ENCODE measurements at regions of chr17 and their contacts with region 1.

Region 1: DNA sequence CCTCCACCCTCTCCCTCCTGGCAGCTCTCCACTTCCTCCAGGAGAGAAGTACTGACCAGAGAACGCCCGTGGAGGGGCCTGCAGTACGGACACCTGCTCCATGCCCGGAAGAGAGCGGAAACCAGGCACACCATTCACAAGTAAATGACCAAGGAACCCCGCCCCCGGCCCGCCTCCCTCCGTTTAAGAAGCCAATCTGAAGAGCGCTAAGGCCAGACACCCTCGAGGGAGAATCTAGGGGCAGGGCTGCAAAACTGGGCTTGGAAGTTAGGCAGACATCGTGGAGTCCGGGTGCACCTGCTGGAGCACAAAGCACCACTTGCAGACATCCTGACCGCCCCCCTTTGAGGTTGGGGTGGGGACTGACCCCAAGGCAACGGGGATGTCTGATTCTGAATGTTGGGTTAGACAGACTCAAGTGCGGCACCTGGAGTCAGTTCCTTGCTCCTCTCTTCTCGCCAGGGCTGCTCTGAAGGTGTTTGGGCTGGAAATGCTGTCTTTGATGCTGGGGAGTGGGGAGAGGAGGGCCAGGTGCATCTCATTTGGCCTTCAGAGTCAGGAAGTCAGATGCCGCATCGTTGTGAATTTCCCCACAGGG is 964 bp upstream of the FAAP100 start:
- DNase-seq: peak; percentile 34 to 83 (median 75)
- ATAC-seq: peak; percentile 77
- H3K4me3 ChIP-seq: peak overlapping the region; percentile 77
- H3K4me3 Mint-ChIP-seq: peak overlapping the region; percentile 88 to 93 (median 90)
- H3K27ac ChIP-seq: peak overlapping the region; percentile 95
- H3K27ac Mint-ChIP-seq: peak overlapping the region; percentile 69 to 95 (median 92)
- H3K4me1 ChIP-seq: peaks cover 17% of the 10 kb centered on the region in 2 donors
- H3K4me1 Mint-ChIP-seq: peaks cover 16 to 41% (median 36%) of the 10 kb centered on the region in 7 donors
- H3K27me3 ChIP-seq: no peaks in the 10 kb centered on the region
- H3K27me3 Mint-ChIP-seq: no peaks in the 10 kb centered on the region

Region 2: DNA sequence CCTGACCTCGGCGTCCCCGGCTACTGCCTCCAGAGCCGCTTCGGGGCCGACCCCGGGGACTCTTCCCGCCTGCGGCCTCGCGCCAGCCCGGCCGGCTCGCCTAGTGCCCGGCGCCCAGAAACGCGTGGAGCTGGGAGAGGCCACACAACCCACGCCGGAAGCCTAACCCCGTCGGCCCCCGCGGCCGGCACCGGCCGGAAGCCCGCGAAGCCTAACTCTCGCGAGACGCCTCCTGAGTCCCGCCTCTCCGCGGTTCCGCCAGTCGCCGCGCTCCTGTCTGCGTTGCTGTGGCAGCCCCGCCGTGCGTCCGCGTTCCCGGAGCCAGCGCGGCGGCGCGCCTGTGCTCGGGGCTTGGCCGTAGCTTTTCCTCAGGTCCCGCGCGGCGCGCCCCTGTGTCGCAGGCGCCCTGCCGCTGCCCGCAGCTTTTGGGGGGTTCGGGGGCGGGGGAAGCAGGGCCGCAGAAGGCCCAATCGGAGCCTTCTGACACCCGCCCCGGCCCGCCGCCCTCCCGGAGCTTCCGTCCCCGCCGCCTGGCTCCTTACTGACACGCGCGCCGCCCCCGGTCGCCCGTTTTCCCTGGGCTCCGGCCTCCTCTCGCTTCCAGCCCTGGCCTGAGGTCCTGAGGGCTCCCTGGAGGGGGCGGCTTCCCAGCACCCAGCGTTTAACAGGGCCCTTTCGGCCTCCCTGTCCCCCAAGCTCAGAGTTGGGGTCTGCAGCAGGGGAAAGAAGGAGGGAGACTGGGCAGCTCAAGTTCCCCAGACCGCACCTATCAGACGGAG is 1098.4 kb before region 1 on chr17:
- CTCF ChIA-PET with region 1: no interaction called
- POLR2A ChIA-PET with region 1: no interaction called
- intact Hi-C with region 1: loop called (anchors 5 to 10 kb)
- DNase-seq: peak; percentile 91 to 97 (median 95)
- ATAC-seq: peak; percentile 95
- H3K4me3 ChIP-seq: peak overlapping the region; percentile 83
- H3K4me3 Mint-ChIP-seq: peak overlapping the region; percentile 86 to 98 (median 92)
- H3K27ac ChIP-seq: peak overlapping the region; percentile 100
- H3K27ac Mint-ChIP-seq: peak overlapping the region; percentile 94 to 99 (median 95)
- H3K4me1 ChIP-seq: peaks cover 11 to 14% of the 10 kb centered on the region in 2 donors
- H3K4me1 Mint-ChIP-seq: peaks cover 0 to 35% (median 15%) of the 10 kb centered on the region in 7 donors
- H3K27me3 ChIP-seq: peaks cover 0 to 3% of the 10 kb centered on the region in 2 donors
- H3K27me3 Mint-ChIP-seq: peaks cover 0 to 22% (median 20%) of the 10 kb centered on the region in 5 donors

Region 3: DNA sequence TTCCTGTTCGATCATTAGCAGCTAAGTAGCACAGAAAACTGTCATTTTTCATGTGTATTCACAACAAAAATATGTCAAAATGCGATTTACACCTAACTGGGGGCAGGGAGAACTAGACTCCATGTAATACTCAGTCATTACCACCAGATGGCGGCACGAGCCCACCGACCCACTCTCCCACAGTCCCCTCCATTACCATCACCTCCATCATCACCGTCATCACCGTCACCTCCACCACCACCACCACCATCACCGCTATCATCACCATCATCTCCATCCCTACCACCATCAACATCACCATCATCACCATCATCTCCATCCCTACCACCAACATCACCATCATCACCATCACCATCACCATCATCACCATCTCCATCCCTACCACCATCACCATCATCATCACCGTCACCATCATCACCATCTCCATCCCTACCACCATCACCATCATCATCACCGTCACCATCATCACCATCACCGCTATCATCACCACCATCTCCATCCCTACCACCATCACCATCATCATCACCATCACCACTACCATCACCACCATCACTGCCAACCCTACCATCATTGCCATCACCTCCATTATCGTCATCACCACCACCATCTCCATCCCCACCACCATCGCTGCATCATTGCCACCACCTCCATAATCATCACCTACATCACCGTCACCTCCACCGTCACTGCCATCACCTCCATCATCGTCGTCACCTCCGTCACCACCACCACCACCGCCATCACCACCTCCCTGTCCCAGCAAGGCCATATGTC is 299.6 kb before region 1 on chr17:
- CTCF ChIA-PET with region 1: interaction called, 3 read pairs
- POLR2A ChIA-PET with region 1: no interaction called
- intact Hi-C with region 1: loop called in 1 of 2 experiments (anchors 1 kb)
- DNase-seq: peak; percentile 34 to 74 (median 63)
- ATAC-seq: peak; percentile 83
- H3K4me3 ChIP-seq: no peak overlapping the region
- H3K4me3 Mint-ChIP-seq: no peak overlapping the region
- H3K27ac ChIP-seq: no peak overlapping the region
- H3K27ac Mint-ChIP-seq: peak overlapping the region in 5 of 9 donors; percentile 2 to 67 (median 27)
- H3K4me1 ChIP-seq: no peaks in the 10 kb centered on the region
- H3K4me1 Mint-ChIP-seq: peaks cover 6 to 10% (median 7%) of the 10 kb centered on the region in 7 donors
- H3K27me3 ChIP-seq: no peaks in the 10 kb centered on the region
- H3K27me3 Mint-ChIP-seq: no peaks in the 10 kb centered on the region

Region 4: GRCh38 chr17:81277421-81277820 is 275.7 kb before region 1 on chr17:
- CTCF ChIA-PET with region 1: no interaction called
- POLR2A ChIA-PET with region 1: no interaction called
- intact Hi-C with region 1: no loop called
- DNase-seq: no peak
- ATAC-seq: no peak
- H3K4me3 ChIP-seq: no peak overlapping the region
- H3K4me3 Mint-ChIP-seq: no peak overlapping the region
- H3K27ac ChIP-seq: no peak overlapping the region
- H3K27ac Mint-ChIP-seq: no peak overlapping the region
- H3K4me1 ChIP-seq: no peaks in the 10 kb centered on the region
- H3K4me1 Mint-ChIP-seq: peaks cover 0 to 12% (median 6%) of the 10 kb centered on the region in 7 donors
- H3K27me3 ChIP-seq: no peaks in the 10 kb centered on the region
- H3K27me3 Mint-ChIP-seq: no peaks in the 10 kb centered on the region

Region 5: DNA sequence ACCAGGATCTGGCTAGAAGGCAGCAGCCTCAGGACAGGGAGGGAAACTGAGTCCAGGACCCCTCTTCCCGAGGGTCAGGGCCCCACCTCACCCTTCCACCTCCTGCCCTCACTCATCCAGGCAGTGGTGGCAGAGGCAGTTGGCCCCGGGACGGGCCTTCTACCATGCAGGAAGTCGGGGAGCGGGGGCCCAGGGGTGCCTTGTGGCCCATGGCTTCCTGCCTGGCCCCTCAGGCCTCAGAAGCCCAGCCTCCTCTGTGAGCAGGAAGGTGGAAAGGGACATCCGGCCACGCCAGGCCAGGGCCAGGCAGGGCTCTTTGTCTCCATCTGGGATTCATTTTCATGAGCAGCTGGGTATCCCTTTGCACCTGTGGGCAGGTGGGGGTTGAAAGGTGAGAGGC is 99.4 kb before region 1 on chr17:
- CTCF ChIA-PET with region 1: no interaction called
- POLR2A ChIA-PET with region 1: no interaction called
- intact Hi-C with region 1: no loop called
- DNase-seq: peak in 4 of 9 donors; percentile 14 to 47 (median 28)
- ATAC-seq: peak; percentile 39
- H3K4me3 ChIP-seq: no peak overlapping the region
- H3K4me3 Mint-ChIP-seq: peak overlapping the region in 1 of 10 donors; percentile 8
- H3K27ac ChIP-seq: no peak overlapping the region
- H3K27ac Mint-ChIP-seq: peak overlapping the region in 1 of 9 donors; percentile 55
- H3K4me1 ChIP-seq: peaks cover 9 to 13% of the 10 kb centered on the region in 2 donors
- H3K4me1 Mint-ChIP-seq: peaks cover 5 to 13% (median 8%) of the 10 kb centered on the region in 7 donors
- H3K27me3 ChIP-seq: no peaks in the 10 kb centered on the region
- H3K27me3 Mint-ChIP-seq: peaks cover 0 to 5% (median 1%) of the 10 kb centered on the region in 5 donors

Region 6: GRCh38 chr17:81471804-81472456 is 81.2 kb before region 1 on chr17:
- CTCF ChIA-PET with region 1: no interaction called
- POLR2A ChIA-PET with region 1: no interaction called
- intact Hi-C with region 1: no loop called
- DNase-seq: peak in 2 of 9 donors; percentile 31 to 42
- ATAC-seq: no peak
- H3K4me3 ChIP-seq: no peak overlapping the region
- H3K4me3 Mint-ChIP-seq: no peak overlapping the region
- H3K27ac ChIP-seq: no peak overlapping the region
- H3K27ac Mint-ChIP-seq: no peak overlapping the region
- H3K4me1 ChIP-seq: no peaks in the 10 kb centered on the region
- H3K4me1 Mint-ChIP-seq: no peaks in the 10 kb centered on the region
- H3K27me3 ChIP-seq: no peaks in the 10 kb centered on the region
- H3K27me3 Mint-ChIP-seq: no peaks in the 10 kb centered on the region

Region 7: DNA sequence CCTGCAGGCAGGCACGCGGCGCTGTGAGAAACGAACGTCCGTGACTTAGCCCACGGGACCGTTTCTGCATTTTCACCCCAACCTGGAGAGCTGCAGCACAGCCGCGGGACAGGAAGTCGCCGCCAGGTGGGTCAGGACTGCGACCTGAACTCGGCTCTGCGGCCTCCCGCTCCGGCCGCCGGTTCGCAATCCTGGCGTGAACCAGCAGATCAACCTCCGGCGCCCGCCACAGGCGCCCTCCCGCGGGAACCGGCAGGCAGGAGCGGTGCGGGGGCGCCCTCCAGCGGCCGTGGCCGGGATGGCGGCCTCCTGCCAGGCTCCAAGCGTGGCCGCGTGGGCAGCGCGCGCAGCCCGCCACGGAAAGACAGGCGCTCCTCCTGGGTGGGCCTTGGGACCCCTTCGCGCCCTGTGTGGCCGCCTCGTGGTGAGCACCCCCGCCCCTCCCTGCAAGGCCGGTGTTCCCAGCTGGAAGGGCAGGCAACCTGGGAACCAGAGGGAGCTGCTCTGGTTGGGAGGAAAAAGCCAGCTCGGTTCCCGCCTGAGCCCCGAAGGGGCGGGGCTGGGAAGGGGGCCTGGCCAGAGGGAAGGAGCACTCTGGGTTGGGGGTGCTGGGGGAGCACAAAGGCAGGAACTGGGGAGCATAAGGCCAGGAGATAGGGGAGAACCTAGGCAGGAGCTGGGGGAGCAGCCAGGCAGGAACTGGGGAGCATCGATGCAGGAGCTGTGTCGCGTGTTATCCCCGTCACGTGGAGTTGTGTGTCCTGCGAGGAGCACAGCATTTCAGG is 68.7 kb before region 1 on chr17:
- CTCF ChIA-PET with region 1: no interaction called
- POLR2A ChIA-PET with region 1: interaction called, 5 read pairs
- intact Hi-C with region 1: loop called (anchors 2 kb)
- DNase-seq: peak; percentile 76 to 96 (median 88)
- ATAC-seq: peak; percentile 88
- H3K4me3 ChIP-seq: peak overlapping the region; percentile 51
- H3K4me3 Mint-ChIP-seq: peak overlapping the region in 6 of 10 donors; percentile 25 to 74 (median 52)
- H3K27ac ChIP-seq: no peak overlapping the region
- H3K27ac Mint-ChIP-seq: no peak overlapping the region
- H3K4me1 ChIP-seq: peaks cover 6 to 10% of the 10 kb centered on the region in 2 donors
- H3K4me1 Mint-ChIP-seq: peaks cover 5 to 15% (median 13%) of the 10 kb centered on the region in 7 donors
- H3K27me3 ChIP-seq: peaks cover 0 to 15% of the 10 kb centered on the region in 2 donors
- H3K27me3 Mint-ChIP-seq: peaks cover 11 to 30% (median 20%) of the 10 kb centered on the region in 5 donors

Region 8: GRCh38 chr17:81563861-81564586 is 10.9 kb after region 1 on chr17:
- CTCF ChIA-PET with region 1: interaction called, 4 read pairs
- POLR2A ChIA-PET with region 1: interaction called, 10 read pairs
- intact Hi-C with region 1: no loop called
- DNase-seq: no peak
- ATAC-seq: peak; percentile 40
- H3K4me3 ChIP-seq: no peak overlapping the region
- H3K4me3 Mint-ChIP-seq: no peak overlapping the region
- H3K27ac ChIP-seq: no peak overlapping the region
- H3K27ac Mint-ChIP-seq: no peak overlapping the region
- H3K4me1 ChIP-seq: no peaks in the 10 kb centered on the region
- H3K4me1 Mint-ChIP-seq: peaks cover 0 to 6% (median 0%) of the 10 kb centered on the region in 7 donors
- H3K27me3 ChIP-seq: no peaks in the 10 kb centered on the region
- H3K27me3 Mint-ChIP-seq: no peaks in the 10 kb centered on the region

Region 9: GRCh38 chr17:81666342-81667191 is 113.5 kb after region 1 on chr17 and contains the starts of genes CCDC137 and OXLD1:
- CTCF ChIA-PET with region 1: no interaction called
- POLR2A ChIA-PET with region 1: interaction called, 6 read pairs
- intact Hi-C with region 1: loop called in 1 of 2 experiments (anchors 2 kb)
- DNase-seq: peak; percentile 82 to 93 (median 89)
- ATAC-seq: peak; percentile 94
- H3K4me3 ChIP-seq: peak within 1 kb of the TSS; percentile 86
- H3K4me3 Mint-ChIP-seq: peak within 1 kb of the TSS; percentile 88 to 99 (median 94)
- H3K27ac ChIP-seq: peak within 1 kb of the TSS; percentile 93
- H3K27ac Mint-ChIP-seq: peak within 1 kb of the TSS; percentile 84 to 97 (median 92)
- H3K4me1 ChIP-seq: peaks cover 35 to 50% of the 10 kb centered on the region in 2 donors
- H3K4me1 Mint-ChIP-seq: peaks cover 17 to 62% (median 43%) of the 10 kb centered on the region in 7 donors
- H3K27me3 ChIP-seq: no peaks in the 10 kb centered on the region
- H3K27me3 Mint-ChIP-seq: no peaks in the 10 kb centered on the region
- total RNA-seq, gene CCDC137: 16.3 to 33.5 (median 27.1) TPM
- total RNA-seq, gene OXLD1: 35.9 to 61.9 (median 47.5) TPM

Measured in naive thymus-derived CD4-positive, alpha-beta T cell (primary cell).